ENCODE measurements at regions of chr3 and their contacts with region 1.

Region 1: DNA sequence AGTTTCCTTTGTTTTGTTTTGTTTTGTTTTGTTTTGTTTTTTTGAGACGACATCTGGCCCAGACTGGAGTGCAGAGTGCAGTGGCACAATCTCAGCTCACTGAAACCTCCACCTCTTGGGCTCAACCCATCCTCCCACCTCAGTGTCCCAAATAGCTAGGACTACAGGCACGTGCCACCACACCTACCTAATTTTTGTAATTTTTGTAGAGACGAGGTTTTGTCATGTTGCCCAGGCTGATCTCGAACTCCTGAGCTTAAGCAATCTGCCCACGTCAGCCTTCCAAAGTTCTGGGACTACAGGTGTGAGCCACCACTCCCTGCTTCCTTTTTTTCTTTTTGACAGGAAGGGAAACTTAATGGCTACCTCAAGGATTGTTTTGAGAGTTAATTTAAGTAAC is 9.1 kb downstream of the CCDC66 start:
- H3K4me3 Mint-ChIP-seq: no peak overlapping the region
- H3K27ac Mint-ChIP-seq: no peak overlapping the region
- H3K4me1 Mint-ChIP-seq: peaks cover 8% of the 10 kb centered on the region
- H3K27me3 Mint-ChIP-seq: no peaks in the 10 kb centered on the region

Region 2: DNA sequence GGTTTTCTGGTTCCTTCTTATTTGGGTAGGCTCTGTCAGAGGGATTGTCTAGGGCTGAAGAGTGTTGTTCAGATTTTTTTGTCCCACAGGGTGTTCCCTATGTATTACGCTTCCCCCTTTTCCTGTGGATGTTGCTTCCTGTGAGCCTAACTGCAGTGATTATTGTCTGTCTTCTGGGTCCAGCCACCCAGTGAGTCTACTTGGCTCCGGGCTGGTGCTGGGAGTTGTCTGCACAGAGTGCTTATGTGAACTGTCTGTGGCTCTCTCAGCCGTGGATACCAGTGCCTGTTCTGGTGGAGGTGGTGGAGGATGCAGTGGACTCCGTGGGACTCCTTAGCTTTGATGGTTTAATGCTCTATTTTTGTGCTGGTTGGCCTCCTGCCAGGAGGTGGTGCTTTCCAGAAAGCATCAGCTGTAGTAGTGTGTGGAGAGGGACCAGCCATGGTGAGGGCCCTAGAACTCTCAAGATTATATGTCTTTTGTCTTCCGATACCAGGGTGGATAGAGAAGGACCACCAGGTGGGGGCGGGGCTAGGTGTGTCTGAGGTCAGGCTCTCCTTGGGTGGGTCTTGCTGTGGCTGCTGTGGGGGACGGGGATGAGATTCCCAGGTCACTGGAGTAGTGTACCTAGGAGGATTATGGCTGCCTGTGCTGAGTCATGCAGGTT is 44.7 kb after region 1 on chr3:
- intact Hi-C with region 1: loop called (anchors 10 kb)
- H3K4me3 Mint-ChIP-seq: no peak overlapping the region
- H3K27ac Mint-ChIP-seq: no peak overlapping the region
- H3K4me1 Mint-ChIP-seq: peaks cover 7% of the 10 kb centered on the region
- H3K27me3 Mint-ChIP-seq: no peaks in the 10 kb centered on the region

Region 3: GRCh38 chr3:56878074-56878473 is 312.0 kb after region 1 on chr3:
- intact Hi-C with region 1: no loop called
- H3K4me3 Mint-ChIP-seq: no peak overlapping the region
- H3K27ac Mint-ChIP-seq: peak overlapping the region; percentile 58
- H3K4me1 Mint-ChIP-seq: peaks cover 30% of the 10 kb centered on the region
- H3K27me3 Mint-ChIP-seq: no peaks in the 10 kb centered on the region

Measured in dendritic cell treated with granulocyte-macrophage colony-stimulating factor and Interleukin-4, amounts not matched to agents 40 ng/mL and 50 ng/mL, for 4 days (primary cell).